ENCODE measurements at regions of chr17 and their contacts with region 1.

Region 1: GRCh38 chr17:7632492-7632894 is 2.6 kb downstream of the SHBG start:
- DNase-seq: peak; percentile 56
- ATAC-seq: peak; percentile 55
- H3K4me3 Mint-ChIP-seq: no peak overlapping the region
- H3K27ac Mint-ChIP-seq: no peak overlapping the region
- H3K4me1 Mint-ChIP-seq: peaks cover 35% of the 10 kb centered on the region
- H3K27me3 Mint-ChIP-seq: no peaks in the 10 kb centered on the region
- CTCF ChIP-seq: peak; percentile 28; the same call in 1 of the 2 replicates

Region 2: GRCh38 chr17:7523033-7523432 is 109.5 kb before region 1 on chr17:
- CTCF ChIA-PET with region 1: no interaction called
- POLR2A ChIA-PET with region 1: no interaction called
- DNase-seq: peak; percentile 58
- ATAC-seq: peak; percentile 100
- H3K4me3 Mint-ChIP-seq: no peak overlapping the region
- H3K27ac Mint-ChIP-seq: peak overlapping the region; percentile 95
- H3K4me1 Mint-ChIP-seq: peaks cover 3% of the 10 kb centered on the region
- H3K27me3 Mint-ChIP-seq: peaks cover 24% of the 10 kb centered on the region
- CTCF ChIP-seq: peak; percentile 65

Region 3: DNA sequence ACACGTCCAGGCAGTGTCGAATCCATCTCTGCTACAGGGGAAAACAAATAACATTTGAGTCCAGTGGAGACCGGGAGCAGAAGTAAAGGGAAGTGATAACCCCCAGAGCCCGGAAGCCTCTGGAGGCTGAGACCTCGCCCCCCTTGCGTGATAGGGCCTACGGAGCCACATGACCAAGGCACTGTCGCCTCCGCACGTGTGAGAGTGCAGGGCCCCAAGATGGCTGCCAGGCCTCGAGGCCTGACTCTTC is 60.2 kb before region 1 on chr17:
- CTCF ChIA-PET with region 1: no interaction called
- POLR2A ChIA-PET with region 1: no interaction called
- DNase-seq: no peak
- ATAC-seq: peak; percentile 89; the same call in 1 of the 2 replicates
- H3K4me3 Mint-ChIP-seq: peak overlapping the region; percentile 93
- H3K27ac Mint-ChIP-seq: peak overlapping the region; percentile 100
- H3K4me1 Mint-ChIP-seq: peaks cover 41% of the 10 kb centered on the region
- H3K27me3 Mint-ChIP-seq: no peaks in the 10 kb centered on the region
- CTCF ChIP-seq: no peak

Region 4: DNA sequence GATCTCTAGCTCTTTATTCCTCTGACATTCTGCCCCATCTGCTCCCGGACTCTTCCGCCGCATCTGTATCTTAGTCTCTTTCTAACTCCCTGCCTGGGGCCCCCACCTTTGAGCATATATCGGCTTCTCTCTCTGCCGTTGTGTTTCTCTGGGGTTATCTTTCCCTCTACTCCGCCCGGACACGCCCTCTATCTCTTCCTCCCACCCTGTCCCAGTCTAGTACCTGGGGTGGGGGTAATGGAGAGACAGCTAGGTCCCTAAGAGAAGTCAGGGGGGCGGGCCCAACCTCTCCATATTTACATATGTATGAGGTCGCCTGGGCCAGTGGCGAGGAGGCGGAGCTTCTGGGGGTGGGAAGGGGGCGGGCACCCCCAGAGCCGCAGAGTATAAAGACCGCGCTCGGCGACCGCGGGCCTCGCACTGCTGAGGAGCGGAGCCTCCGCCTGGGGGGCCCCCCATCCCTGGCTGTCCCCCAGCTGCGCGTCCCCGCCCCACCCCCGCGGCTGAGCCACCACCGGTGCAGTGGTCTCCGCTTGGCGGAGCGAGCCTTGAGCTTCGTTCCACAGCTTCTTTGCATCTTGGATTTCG is 18.1 kb after region 1 on chr17 and contains the start of gene ATP1B2:
- CTCF ChIA-PET with region 1: interaction called, 88 read pairs
- POLR2A ChIA-PET with region 1: interaction called, 20 read pairs
- DNase-seq: peak; percentile 96
- ATAC-seq: peak; percentile 97
- H3K4me3 Mint-ChIP-seq: peak within 1 kb of the TSS; percentile 83
- H3K27ac Mint-ChIP-seq: peak within 1 kb of the TSS; percentile 73
- H3K4me1 Mint-ChIP-seq: peaks cover 33% of the 10 kb centered on the region
- H3K27me3 Mint-ChIP-seq: peaks cover 53% of the 10 kb centered on the region
- CTCF ChIP-seq: no peak
- total RNA-seq, gene ATP1B2: 29.1 to 37.5 TPM (median 35.9 TPM) in 3 replicates

Region 5: GRCh38 chr17:7673239-7673638 is 40.7 kb after region 1 on chr17:
- CTCF ChIA-PET with region 1: interaction called, 74 read pairs
- POLR2A ChIA-PET with region 1: interaction called, 3 read pairs
- DNase-seq: peak; percentile 78
- ATAC-seq: no peak
- H3K4me3 Mint-ChIP-seq: no peak overlapping the region
- H3K27ac Mint-ChIP-seq: no peak overlapping the region; the same call in 1 of the 2 replicates
- H3K4me1 Mint-ChIP-seq: peaks cover 31% of the 10 kb centered on the region
- H3K27me3 Mint-ChIP-seq: no peaks in the 10 kb centered on the region; the same call in 1 of the 2 replicates
- CTCF ChIP-seq: peak; percentile 58

Region 6: GRCh38 chr17:7703584-7704479 is 71.3 kb after region 1 on chr17:
- CTCF ChIA-PET with region 1: interaction called, 24 read pairs
- POLR2A ChIA-PET with region 1: interaction called, 5 read pairs
- DNase-seq: peak; percentile 81
- ATAC-seq: peak; percentile 68
- H3K4me3 Mint-ChIP-seq: peak overlapping the region; percentile 86
- H3K27ac Mint-ChIP-seq: peak overlapping the region; percentile 88
- H3K4me1 Mint-ChIP-seq: peaks cover 30% of the 10 kb centered on the region
- H3K27me3 Mint-ChIP-seq: peaks cover 13% of the 10 kb centered on the region
- CTCF ChIP-seq: no peak

Region 7: DNA sequence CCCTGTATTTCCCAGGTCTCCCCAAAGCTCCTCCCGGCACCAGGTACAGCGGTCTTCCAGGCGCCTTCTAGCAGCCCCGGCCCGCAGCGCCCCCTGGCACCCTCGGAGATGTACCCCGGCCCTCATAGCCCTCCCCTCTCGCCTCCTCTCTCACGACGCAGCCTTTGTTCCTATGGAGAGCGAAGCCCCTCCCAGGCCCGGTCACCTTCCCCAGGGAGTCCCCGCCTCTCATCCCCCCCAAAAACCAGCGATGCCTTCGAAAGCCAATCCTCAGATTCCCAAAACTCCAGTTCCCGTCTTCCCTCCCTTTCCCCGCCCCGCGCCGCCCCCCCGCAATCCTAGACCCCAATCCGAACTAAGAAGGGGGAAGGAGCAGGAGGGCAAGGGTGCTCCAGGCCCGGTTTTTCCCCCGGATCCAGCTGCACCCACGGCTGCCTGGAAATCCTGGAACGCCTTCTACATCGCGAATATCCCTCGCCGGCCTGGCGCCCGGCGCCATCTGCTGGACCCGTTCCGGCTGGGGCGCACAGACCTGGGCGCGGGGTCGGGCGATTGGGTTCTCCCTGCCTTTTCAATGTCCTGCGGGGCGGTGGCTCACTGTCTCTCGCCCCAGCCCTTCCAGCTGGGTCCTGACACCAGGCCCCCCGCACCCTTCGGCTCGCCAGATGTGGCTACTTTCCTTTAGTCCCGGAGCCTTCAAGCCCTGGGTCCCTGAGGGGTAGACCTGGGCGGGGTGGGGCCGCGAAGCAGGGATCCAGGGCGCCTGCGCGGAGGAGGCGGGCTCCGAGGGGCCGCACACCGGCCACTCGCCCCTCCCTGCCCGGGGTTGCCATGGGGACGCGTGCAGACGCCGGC is 84.6 kb after region 1 on chr17 and contains the start of gene DNAH2:
- CTCF ChIA-PET with region 1: interaction called, 24 read pairs
- POLR2A ChIA-PET with region 1: interaction called, 7 read pairs
- DNase-seq: peak; percentile 96
- ATAC-seq: peak; percentile 88
- H3K4me3 Mint-ChIP-seq: peak within 1 kb of the TSS; percentile 83
- H3K27ac Mint-ChIP-seq: peak within 1 kb of the TSS; percentile 72; the same call in 1 of the 2 replicates
- H3K4me1 Mint-ChIP-seq: peaks cover 36% of the 10 kb centered on the region
- H3K27me3 Mint-ChIP-seq: peaks cover 47% of the 10 kb centered on the region
- CTCF ChIP-seq: no peak
- total RNA-seq, gene DNAH2: 0.17 to 0.34 TPM (median 0.27 TPM) in 3 replicates

Measured in WTC11 (cell line).